ENCODE measurements at regions of chr3 and their contacts with region 1.

Region 1: GRCh38 chr3:126389112-126389793 is 5.5 kb upstream of the CFAP100 start:
- DNase-seq: no peak
- ATAC-seq: peak; percentile 99
- H3K4me3 ChIP-seq: no peak overlapping the region
- H3K27ac ChIP-seq: no peak overlapping the region
- H3K4me1 ChIP-seq: peaks cover 13% of the 10 kb centered on the region
- H3K27me3 ChIP-seq: peaks cover 0 to 3% of the 10 kb centered on the region in 2 experiments; a peak in 2 of 4 replicates
- CTCF ChIP-seq: peak; percentile 77 to 99 (median 86)
- EP300 ChIP-seq: no peak
- POLR2A ChIP-seq: no peak
- RAD21 ChIP-seq: peak; percentile 68

Region 2: DNA sequence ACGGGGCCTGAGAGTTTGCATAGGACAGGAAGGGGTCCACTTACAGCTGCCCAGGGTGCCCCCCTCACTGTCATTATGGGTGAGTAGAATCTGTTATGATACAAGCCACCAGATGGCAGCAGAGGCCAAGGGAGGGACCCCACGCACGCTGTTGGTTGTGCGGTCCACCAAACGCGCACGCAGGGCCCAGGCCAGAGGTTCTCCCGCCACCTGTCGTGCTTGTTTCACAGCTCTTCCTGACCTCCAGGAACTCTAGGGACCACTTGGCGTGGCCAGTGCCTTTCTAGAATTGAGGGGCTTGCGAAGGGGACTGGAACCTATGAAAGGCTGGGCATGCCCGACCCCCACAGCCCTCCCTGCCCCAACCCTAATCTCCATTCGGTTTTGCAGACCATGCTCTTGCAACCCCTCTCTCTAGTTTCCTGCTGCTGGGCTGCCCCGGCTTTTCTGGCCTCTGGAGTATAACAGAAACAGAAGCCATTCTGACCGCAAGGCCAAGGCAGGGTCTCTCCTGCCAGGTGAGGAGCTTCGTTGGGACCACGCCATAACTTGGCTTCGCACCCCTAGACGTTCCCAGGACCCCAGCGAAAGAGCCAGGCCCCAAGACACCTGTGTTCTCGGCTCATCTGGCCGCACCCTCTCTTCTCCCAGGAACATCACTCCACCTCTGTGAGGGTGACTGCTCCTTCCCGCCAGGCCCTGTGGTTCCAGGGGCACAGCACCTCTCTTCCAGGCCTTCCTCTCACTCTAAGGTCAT is 254.9 kb before region 1 on chr3:
- CTCF ChIA-PET with region 1: interaction called, 4 read pairs
- POLR2A ChIA-PET with region 1: no interaction called
- RAD21 ChIA-PET with region 1: interaction called, 3 read pairs
- SMC1A ChIA-PET with region 1: interaction called, 5 read pairs
- in situ Hi-C with region 1: loop called (anchors 10 kb)
- intact Hi-C with region 1: loop called (anchors 1 kb)
- DNase-seq: no peak
- ATAC-seq: peak; percentile 95
- H3K4me3 ChIP-seq: no peak overlapping the region
- H3K27ac ChIP-seq: no peak overlapping the region
- H3K4me1 ChIP-seq: no peaks in the 10 kb centered on the region
- H3K27me3 ChIP-seq: peaks cover 0 to 3% of the 10 kb centered on the region in 2 experiments; a peak in 1 of 4 replicates
- CTCF ChIP-seq: peak; percentile 53 to 74 (median 72); a peak in 5 of 6 replicates
- EP300 ChIP-seq: no peak
- POLR2A ChIP-seq: no peak
- RAD21 ChIP-seq: peak; percentile 66

Region 3: GRCh38 chr3:126259411-126260391 is 129.6 kb before region 1 on chr3:
- CTCF ChIA-PET with region 1: no interaction called
- POLR2A ChIA-PET with region 1: no interaction called
- RAD21 ChIA-PET with region 1: no interaction called
- SMC1A ChIA-PET with region 1: no interaction called
- in situ Hi-C with region 1: no loop called
- intact Hi-C with region 1: loop called (anchors 5 kb)
- DNase-seq: no peak
- ATAC-seq: no peak; the same call in 2 of the 3 replicates
- H3K4me3 ChIP-seq: no peak overlapping the region
- H3K27ac ChIP-seq: no peak overlapping the region
- H3K4me1 ChIP-seq: no peaks in the 10 kb centered on the region
- H3K27me3 ChIP-seq: no peaks in the 10 kb centered on the region; a peak in 1 of 4 replicates
- CTCF ChIP-seq: peak; percentile 4 to 33 (median 13); a peak in 2 of 6 replicates
- EP300 ChIP-seq: no peak
- POLR2A ChIP-seq: no peak
- RAD21 ChIP-seq: peak; percentile 32

Region 4: GRCh38 chr3:126287536-126288241 is 101.6 kb before region 1 on chr3:
- CTCF ChIA-PET with region 1: no interaction called
- POLR2A ChIA-PET with region 1: no interaction called
- RAD21 ChIA-PET with region 1: no interaction called
- SMC1A ChIA-PET with region 1: no interaction called
- in situ Hi-C with region 1: loop called (anchors 25 kb)
- intact Hi-C with region 1: no loop called
- DNase-seq: no peak
- ATAC-seq: no peak
- H3K4me3 ChIP-seq: no peak overlapping the region
- H3K27ac ChIP-seq: no peak overlapping the region
- H3K4me1 ChIP-seq: no peaks in the 10 kb centered on the region
- H3K27me3 ChIP-seq: peaks cover 3 to 13% of the 10 kb centered on the region in 2 experiments
- CTCF ChIP-seq: no peak
- EP300 ChIP-seq: no peak
- POLR2A ChIP-seq: no peak
- RAD21 ChIP-seq: no peak

Region 5: DNA sequence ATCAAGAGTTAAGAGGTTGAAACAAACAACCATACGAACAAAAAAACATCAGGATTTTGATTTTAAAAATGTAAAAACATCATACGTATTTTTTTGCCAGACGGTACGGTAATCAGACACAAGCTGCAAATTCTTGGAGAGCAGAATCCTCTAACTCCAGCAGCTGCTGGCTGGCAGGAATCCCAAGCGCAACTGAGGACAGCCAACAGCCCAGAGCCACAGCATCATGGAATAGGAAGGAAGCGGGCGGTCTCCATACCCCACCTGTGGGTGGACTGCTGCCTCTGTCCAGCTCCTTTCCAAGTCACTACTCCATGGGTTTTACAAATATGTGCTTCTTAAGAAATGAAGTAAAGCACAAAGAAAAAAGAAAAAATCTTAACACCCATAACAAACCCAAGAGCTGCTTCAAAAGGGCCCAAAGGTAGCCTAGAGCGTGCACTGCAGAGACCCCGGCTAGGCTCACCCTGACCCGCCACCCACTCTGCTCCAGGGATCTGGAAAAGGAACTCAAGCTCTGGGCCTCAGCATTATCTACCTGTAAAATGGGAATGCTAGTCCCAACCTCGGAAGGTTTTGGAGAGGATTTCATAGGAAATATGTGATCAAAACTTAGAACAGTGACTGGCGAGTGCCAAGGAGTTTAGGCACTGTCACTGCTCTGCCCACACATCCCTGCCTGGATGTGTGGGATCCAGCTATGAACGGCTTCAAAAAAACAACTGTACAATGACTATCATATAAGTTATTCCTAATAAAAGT is 53.0 kb after region 1 on chr3:
- CTCF ChIA-PET with region 1: no interaction called
- POLR2A ChIA-PET with region 1: no interaction called
- RAD21 ChIA-PET with region 1: no interaction called
- SMC1A ChIA-PET with region 1: no interaction called
- in situ Hi-C with region 1: no loop called
- intact Hi-C with region 1: no loop called
- DNase-seq: no peak
- ATAC-seq: no peak
- H3K4me3 ChIP-seq: no peak overlapping the region
- H3K27ac ChIP-seq: no peak overlapping the region
- H3K4me1 ChIP-seq: no peaks in the 10 kb centered on the region
- H3K27me3 ChIP-seq: no peaks in the 10 kb centered on the region
- CTCF ChIP-seq: no peak
- EP300 ChIP-seq: no peak
- POLR2A ChIP-seq: no peak
- RAD21 ChIP-seq: no peak

Region 6: DNA sequence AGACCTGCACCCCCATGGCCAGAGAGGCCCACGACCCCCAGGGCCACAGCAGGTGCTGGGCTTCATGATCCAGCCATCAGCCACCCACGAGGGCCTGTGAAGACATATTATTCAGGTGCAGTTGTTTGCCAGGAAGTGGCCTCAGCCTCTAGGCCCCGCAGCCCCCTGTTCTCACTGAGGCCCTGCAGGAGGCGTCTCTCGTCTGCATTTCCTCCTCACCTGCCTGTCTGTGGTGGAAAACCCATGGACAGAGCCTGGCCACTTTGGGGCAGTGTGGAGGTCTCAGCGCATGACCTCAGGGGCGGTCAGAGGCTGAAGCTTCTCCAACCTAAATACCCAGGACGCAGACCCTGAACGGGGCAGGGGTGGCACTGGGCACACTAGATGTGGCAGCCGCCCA is 109.7 kb after region 1 on chr3:
- CTCF ChIA-PET with region 1: no interaction called
- POLR2A ChIA-PET with region 1: no interaction called
- RAD21 ChIA-PET with region 1: no interaction called
- SMC1A ChIA-PET with region 1: no interaction called
- in situ Hi-C with region 1: no loop called
- intact Hi-C with region 1: no loop called
- DNase-seq: no peak
- ATAC-seq: no peak
- H3K4me3 ChIP-seq: no peak overlapping the region
- H3K27ac ChIP-seq: no peak overlapping the region
- H3K4me1 ChIP-seq: no peaks in the 10 kb centered on the region
- H3K27me3 ChIP-seq: no peaks in the 10 kb centered on the region
- CTCF ChIP-seq: no peak
- EP300 ChIP-seq: no peak
- POLR2A ChIP-seq: no peak
- RAD21 ChIP-seq: no peak

Region 7: DNA sequence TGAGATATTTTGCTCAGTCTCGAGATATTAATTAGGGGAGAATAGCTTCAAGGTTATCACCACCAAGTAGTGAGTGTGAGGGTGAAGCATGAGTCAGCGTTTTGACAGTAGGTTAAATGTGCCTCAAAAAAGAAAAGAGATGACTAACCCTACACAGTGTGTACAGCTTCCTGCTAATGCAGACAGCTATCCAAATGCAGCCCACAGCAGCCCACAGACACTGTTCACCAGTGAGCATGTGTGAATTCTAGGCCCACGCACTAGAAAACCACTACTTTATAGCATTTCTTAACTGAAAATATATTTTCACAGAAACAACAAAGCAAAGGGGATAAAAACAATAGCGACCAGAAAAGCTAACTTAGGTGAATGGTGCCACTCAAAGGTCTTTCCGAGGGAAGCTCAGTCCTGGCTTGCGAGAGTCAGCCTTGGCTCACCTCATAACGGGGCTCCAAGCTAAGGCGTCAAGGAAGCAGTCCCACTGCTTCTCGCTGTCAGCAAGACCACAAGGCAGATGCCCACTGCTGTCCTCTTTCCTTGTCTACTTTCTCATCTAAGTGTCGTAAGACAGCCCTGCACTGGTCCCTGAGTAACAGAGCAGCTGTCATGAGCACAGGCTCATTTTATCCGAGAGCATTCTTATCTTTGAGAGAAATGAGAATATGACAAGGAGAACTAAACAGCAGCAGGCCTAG is 218.1 kb after region 1 on chr3:
- CTCF ChIA-PET with region 1: no interaction called
- POLR2A ChIA-PET with region 1: no interaction called
- RAD21 ChIA-PET with region 1: no interaction called
- SMC1A ChIA-PET with region 1: no interaction called
- in situ Hi-C with region 1: no loop called
- intact Hi-C with region 1: no loop called
- DNase-seq: no peak
- ATAC-seq: peak; percentile 68
- H3K4me3 ChIP-seq: no peak overlapping the region
- H3K27ac ChIP-seq: no peak overlapping the region
- H3K4me1 ChIP-seq: no peaks in the 10 kb centered on the region
- H3K27me3 ChIP-seq: peaks cover 2 to 3% of the 10 kb centered on the region in 2 experiments; a peak in 1 of 4 replicates
- CTCF ChIP-seq: no peak
- EP300 ChIP-seq: no peak
- POLR2A ChIP-seq: no peak
- RAD21 ChIP-seq: no peak